ENCODE measurements at regions of chr7 and their contacts with region 1.

Region 1: DNA sequence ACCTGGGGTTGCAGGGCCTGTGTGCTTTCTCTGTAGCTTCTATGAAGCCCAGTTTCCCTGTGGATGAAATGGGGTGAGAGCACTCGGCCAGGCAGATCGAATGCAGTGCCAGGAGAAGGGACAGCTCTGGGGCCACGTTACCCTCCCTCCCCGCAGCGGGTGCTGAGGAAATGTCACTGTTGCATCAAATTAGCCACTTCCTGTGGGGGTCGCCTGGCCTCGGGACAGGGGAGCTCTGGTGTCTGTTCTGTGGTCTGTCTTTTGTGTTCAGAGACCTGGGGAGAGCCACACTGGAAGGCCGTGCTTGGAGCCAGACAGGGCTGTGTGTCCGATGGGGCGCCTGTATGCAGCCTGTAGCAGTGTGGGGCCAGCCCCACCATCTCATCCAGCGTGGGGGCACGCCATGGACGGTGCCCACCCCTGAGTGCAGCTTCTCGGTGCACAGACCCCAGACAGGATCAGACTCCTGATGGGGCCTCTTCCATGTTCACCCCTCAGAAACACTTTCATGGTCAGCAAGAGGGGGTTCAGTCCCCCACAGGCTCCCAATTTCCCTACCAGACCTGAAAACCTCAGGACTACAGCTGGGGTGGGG is 13.6 kb downstream of the TTYH3 start:
- DNase-seq: peak in 8 of 9 experiments; percentile 33 to 77 (median 52)
- ATAC-seq: peak; percentile 64
- H3K4me3 ChIP-seq: peak overlapping the region; percentile 40
- H3K4me3 Mint-ChIP-seq: peak overlapping the region; percentile 81
- H3K27ac ChIP-seq: peak overlapping the region in 1 of 2 experiments; percentile 42
- H3K27ac Mint-ChIP-seq: peak overlapping the region; percentile 72
- H3K4me1 ChIP-seq: peaks cover 27% of the 10 kb centered on the region
- H3K4me1 Mint-ChIP-seq: peaks cover 23% of the 10 kb centered on the region
- H3K27me3 ChIP-seq: no peaks in the 10 kb centered on the region
- H3K27me3 Mint-ChIP-seq: no peaks in the 10 kb centered on the region
- CTCF ChIP-seq: no peak

Region 2: GRCh38 chr7:2632733-2633537 is 12.4 kb before region 1 on chr7:
- CTCF ChIA-PET with region 1: no interaction called
- POLR2A ChIA-PET with region 1: interaction called, 3 read pairs
- intact Hi-C with region 1: loop called in 1 of 2 experiments (anchors 1 kb)
- DNase-seq: peak in 7 of 9 experiments; percentile 15 to 60 (median 48)
- ATAC-seq: peak; percentile 4
- H3K4me3 ChIP-seq: peak overlapping the region; percentile 69 to 79
- H3K4me3 Mint-ChIP-seq: peak overlapping the region; percentile 88
- H3K27ac ChIP-seq: peak overlapping the region; percentile 43 to 53
- H3K27ac Mint-ChIP-seq: peak overlapping the region; percentile 77
- H3K4me1 ChIP-seq: peaks cover 25% of the 10 kb centered on the region
- H3K4me1 Mint-ChIP-seq: peaks cover 14% of the 10 kb centered on the region
- H3K27me3 ChIP-seq: no peaks in the 10 kb centered on the region
- H3K27me3 Mint-ChIP-seq: no peaks in the 10 kb centered on the region
- CTCF ChIP-seq: no peak

Region 3: GRCh38 chr7:2698581-2699288 is 53.4 kb after region 1 on chr7:
- CTCF ChIA-PET with region 1: no interaction called
- POLR2A ChIA-PET with region 1: no interaction called
- intact Hi-C with region 1: no loop called
- DNase-seq: peak; percentile 34 to 92 (median 76)
- ATAC-seq: peak; percentile 92
- H3K4me3 ChIP-seq: peak overlapping the region; percentile 15
- H3K4me3 Mint-ChIP-seq: peak overlapping the region; percentile 64
- H3K27ac ChIP-seq: peak overlapping the region in 1 of 2 experiments; percentile 38
- H3K27ac Mint-ChIP-seq: peak overlapping the region; percentile 85
- H3K4me1 ChIP-seq: peaks cover 23% of the 10 kb centered on the region
- H3K4me1 Mint-ChIP-seq: peaks cover 21% of the 10 kb centered on the region
- H3K27me3 ChIP-seq: no peaks in the 10 kb centered on the region
- H3K27me3 Mint-ChIP-seq: no peaks in the 10 kb centered on the region
- CTCF ChIP-seq: no peak

Region 4: GRCh38 chr7:2956526-2957368 is 311.4 kb after region 1 on chr7:
- CTCF ChIA-PET with region 1: no interaction called
- POLR2A ChIA-PET with region 1: no interaction called
- intact Hi-C with region 1: loop called in 1 of 2 experiments (anchors 5 kb)
- DNase-seq: peak in 4 of 9 experiments; percentile 20 to 57 (median 43)
- ATAC-seq: peak; percentile 33
- H3K4me3 ChIP-seq: no peak overlapping the region
- H3K4me3 Mint-ChIP-seq: no peak overlapping the region
- H3K27ac ChIP-seq: peak overlapping the region; percentile 10 to 60
- H3K27ac Mint-ChIP-seq: peak overlapping the region; percentile 72
- H3K4me1 ChIP-seq: peaks cover 53% of the 10 kb centered on the region
- H3K4me1 Mint-ChIP-seq: peaks cover 63% of the 10 kb centered on the region
- H3K27me3 ChIP-seq: no peaks in the 10 kb centered on the region
- H3K27me3 Mint-ChIP-seq: no peaks in the 10 kb centered on the region
- CTCF ChIP-seq: no peak